Heart right ventricle (tissue), 16 donors: ENCODE measurements at regions of chr1 and their contacts with region 1.

Region 1: DNA sequence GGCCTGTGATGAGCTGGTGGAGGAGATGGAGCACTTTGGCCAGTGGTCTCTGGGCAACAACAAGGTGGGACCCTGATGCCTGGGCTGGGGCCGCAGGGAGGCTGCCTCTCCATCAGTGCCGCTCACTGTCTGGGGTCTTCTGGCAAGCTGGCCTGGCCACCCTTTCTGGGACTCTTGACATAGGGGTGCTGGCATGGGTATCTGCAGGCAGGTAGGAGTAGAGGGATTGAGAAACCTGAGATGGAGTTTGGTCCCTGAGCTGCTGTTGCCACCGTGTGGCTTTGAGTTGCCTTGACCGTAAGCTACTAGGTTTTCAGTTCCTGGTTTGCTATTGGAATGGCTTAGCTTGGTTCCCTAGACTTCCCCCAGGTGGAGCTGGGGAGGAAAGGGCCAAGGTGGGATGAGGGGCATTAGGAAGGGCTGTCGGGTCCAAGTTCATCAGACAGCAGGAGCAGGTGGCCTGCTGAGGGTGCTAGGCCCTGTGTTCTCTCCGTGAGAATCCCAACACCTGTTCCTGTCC is 13.2 kb upstream of the MFN2 start:
- DNase-seq: no peak
- ATAC-seq: peak; percentile 23 to 78 (median 53)
- H3K4me3 ChIP-seq: no peak overlapping the region
- H3K27ac ChIP-seq: no peak overlapping the region
- H3K4me1 ChIP-seq: no peaks in the 10 kb centered on the region
- H3K27me3 ChIP-seq: no peaks in the 10 kb centered on the region
- CTCF ChIP-seq: peak; percentile 12 to 65 (median 52)

Region 2: DNA sequence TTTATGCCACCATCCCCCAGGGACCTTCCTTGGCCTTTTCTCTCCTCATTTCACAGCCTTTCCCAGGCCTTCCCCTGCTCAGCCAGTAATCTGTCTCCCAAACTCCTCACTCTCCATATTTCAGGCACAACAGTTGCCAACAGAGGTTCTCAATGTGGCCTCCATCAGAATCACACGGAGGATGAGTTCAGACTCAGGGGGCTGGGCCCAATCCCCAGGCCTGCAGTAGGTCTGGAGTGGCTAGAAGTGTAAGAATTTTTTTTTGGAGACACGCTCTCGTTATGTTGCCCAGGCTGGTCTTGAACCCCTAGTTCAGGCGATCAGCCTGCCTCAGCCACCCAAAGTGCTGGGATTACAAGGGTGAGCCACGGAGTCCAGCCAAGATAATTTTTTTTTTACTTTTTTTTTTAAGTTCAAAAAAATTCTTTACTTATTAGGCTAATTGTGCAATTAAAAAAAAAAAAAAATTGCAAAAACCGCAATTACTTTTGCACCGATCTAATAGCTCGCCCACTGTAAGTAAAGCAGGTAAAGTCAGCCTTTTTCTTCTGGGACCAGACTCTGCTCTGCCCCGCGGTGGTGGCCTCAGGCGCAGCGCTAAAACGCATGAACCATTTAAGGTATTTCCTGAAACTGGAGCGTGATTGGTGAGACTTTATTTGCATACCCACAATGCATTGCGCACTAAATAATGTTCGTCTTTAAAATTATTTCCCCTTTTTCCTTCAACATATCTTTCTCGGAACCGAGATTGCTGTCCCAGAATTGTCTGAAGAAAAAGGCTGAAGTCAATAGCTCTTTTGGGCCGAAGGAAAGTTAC is 59.6 kb before region 1 on chr1:
- intact Hi-C with region 1: loop called in 6 of 10 experiments (anchors 5 to 10 kb)
- DNase-seq: peak; percentile 90 to 91
- ATAC-seq: peak; percentile 79 to 92 (median 86)
- H3K4me3 ChIP-seq: peak overlapping the region in 7 of 10 donors; percentile 49 to 82 (median 65)
- H3K27ac ChIP-seq: peak overlapping the region; percentile 84 to 100 (median 96)
- H3K4me1 ChIP-seq: peaks cover 0 to 22% (median 5%) of the 10 kb centered on the region in 9 donors
- H3K27me3 ChIP-seq: no peaks in the 10 kb centered on the region
- CTCF ChIP-seq: peak; percentile 35 to 98 (median 76)

Region 3: DNA sequence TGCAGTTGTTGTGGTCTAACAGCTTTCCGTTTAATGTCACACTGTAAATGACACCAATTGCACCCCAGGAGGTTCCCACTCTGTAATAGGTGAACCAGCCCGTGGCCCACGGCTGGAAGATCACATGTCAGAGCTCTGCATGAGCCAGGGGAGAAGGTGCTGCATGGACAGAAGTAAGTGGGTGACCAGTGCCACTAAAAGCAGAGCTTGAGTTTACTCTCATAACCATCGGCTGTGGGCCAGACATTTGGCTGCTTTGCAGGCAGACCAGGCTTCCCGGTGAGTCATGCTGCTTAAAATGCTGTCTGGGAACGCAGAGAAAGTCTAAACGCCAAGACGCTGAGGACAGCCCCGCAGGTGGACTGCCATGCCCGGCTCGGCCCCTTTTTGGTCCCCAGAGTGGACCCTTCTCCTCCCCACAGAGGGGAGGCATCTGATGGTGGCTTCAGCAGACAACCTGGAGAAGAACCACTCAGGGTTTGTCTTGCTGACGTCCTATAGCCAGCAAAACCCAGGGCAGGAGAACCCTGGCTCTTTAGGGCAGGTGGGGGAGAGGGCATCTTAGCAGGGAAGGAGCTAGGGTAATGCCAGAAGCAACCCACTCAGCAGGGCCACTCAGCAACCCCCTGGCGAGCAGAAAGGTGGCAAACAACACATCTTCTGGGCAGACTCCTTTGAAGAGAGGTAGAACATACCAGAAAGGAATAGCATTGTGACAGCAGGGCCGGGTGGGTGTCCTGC is 48.1 kb before region 1 on chr1:
- intact Hi-C with region 1: loop called in 5 of 10 experiments (anchors 10 kb)
- DNase-seq: peak; percentile 61 to 78
- ATAC-seq: peak; percentile 71 to 89 (median 86)
- H3K4me3 ChIP-seq: no peak overlapping the region
- H3K27ac ChIP-seq: peak overlapping the region in 9 of 10 donors; percentile 21 to 81 (median 71)
- H3K4me1 ChIP-seq: peaks cover 18 to 62% (median 58%) of the 10 kb centered on the region in 9 donors
- H3K27me3 ChIP-seq: no peaks in the 10 kb centered on the region
- CTCF ChIP-seq: no peak

Region 4: DNA sequence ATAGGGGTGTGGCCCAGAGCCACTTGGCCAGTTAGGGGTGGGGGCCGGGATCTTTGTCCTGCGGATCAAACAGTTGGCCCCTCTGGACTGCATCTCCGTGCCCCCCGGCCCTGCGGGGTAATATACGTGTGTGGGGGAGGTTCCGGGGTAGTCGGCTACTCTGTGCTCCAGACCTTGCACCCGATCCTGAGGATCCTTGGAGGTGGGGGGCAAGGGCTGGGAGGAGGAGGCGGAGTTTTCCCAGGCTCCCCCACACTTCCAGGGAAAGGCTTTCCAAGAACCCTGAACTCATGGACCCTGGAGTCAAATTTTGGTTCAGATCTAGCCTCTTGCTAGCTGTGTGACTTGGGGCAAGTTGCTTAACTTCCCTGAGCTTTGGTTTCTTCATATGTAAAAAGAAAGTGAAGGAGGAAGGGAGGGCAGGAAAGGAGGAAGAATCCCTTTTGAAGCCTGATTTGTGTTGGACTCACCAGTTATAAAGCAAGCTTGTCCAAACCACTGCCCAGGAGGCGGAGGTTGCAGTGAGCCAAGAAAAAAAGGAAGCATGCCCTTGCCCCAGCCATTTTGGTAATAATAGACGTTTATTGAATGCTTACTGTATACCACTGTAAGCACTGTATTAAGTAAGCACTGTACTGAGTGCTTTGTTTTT is 52.9 kb after region 1 on chr1:
- intact Hi-C with region 1: loop called in 1 of 10 experiments (anchors 5 kb)
- DNase-seq: no peak
- ATAC-seq: peak in 7 of 8 donors; percentile 1 to 40 (median 8)
- H3K4me3 ChIP-seq: peak overlapping the region; percentile 77 to 98 (median 90)
- H3K27ac ChIP-seq: peak overlapping the region; percentile 28 to 92 (median 82)
- H3K4me1 ChIP-seq: peaks cover 0 to 18% (median 14%) of the 10 kb centered on the region in 9 donors
- H3K27me3 ChIP-seq: no peaks in the 10 kb centered on the region
- CTCF ChIP-seq: no peak

Region 5: GRCh38 chr1:12040457-12041051 is 73.5 kb after region 1 on chr1:
- intact Hi-C with region 1: no loop called
- DNase-seq: no peak
- ATAC-seq: no peak
- H3K4me3 ChIP-seq: no peak overlapping the region
- H3K27ac ChIP-seq: no peak overlapping the region
- H3K4me1 ChIP-seq: peaks cover 0 to 9% (median 0%) of the 10 kb centered on the region in 9 donors
- H3K27me3 ChIP-seq: no peaks in the 10 kb centered on the region
- CTCF ChIP-seq: no peak

Region 6: GRCh38 chr1:12143631-12144155 is 176.6 kb after region 1 on chr1:
- intact Hi-C with region 1: no loop called
- DNase-seq: peak; percentile 74
- ATAC-seq: peak; percentile 64 to 87 (median 70)
- H3K4me3 ChIP-seq: no peak overlapping the region
- H3K27ac ChIP-seq: peak overlapping the region in 9 of 10 donors; percentile 4 to 93 (median 66)
- H3K4me1 ChIP-seq: peaks cover 12 to 88% (median 47%) of the 10 kb centered on the region in 9 donors
- H3K27me3 ChIP-seq: no peaks in the 10 kb centered on the region
- CTCF ChIP-seq: peak in 3 of 9 donors; percentile 17 to 37 (median 36)